Endothelial cell of umbilical vein (primary cell): ENCODE measurements at regions of chr13 and their contacts with region 1.

Region 1: GRCh38 chr13:40666045-40666904 is at the start of gene FOXO1:
- DNase-seq: peak; percentile 79
- H3K4me3 ChIP-seq: peak within 1 kb of the TSS; percentile 67 to 95 (median 86)
- H3K27ac ChIP-seq: peak within 1 kb of the TSS; percentile 81
- H3K4me1 ChIP-seq: peaks cover 24% of the 10 kb centered on the region
- H3K27me3 ChIP-seq: no peaks in the 10 kb centered on the region
- CTCF ChIP-seq: no peak
- POLR2A ChIP-seq: peak; percentile 97
- total RNA-seq, gene FOXO1: 47.6 and 48.5 TPM in 2 replicates

Region 2: GRCh38 chr13:39783050-39783449 is 883.2 kb before region 1 on chr13:
- CTCF ChIA-PET with region 1: interaction called, 6 read pairs
- POLR2A ChIA-PET with region 1: no interaction called
- dilution Hi-C with region 1: no loop called
- intact Hi-C with region 1: loop called (anchors 5 kb)
- DNase-seq: peak; percentile 80
- H3K4me3 ChIP-seq: no peak overlapping the region
- H3K27ac ChIP-seq: no peak overlapping the region
- H3K4me1 ChIP-seq: peaks cover 62% of the 10 kb centered on the region
- H3K27me3 ChIP-seq: no peaks in the 10 kb centered on the region
- CTCF ChIP-seq: no peak
- POLR2A ChIP-seq: no peak

Region 3: DNA sequence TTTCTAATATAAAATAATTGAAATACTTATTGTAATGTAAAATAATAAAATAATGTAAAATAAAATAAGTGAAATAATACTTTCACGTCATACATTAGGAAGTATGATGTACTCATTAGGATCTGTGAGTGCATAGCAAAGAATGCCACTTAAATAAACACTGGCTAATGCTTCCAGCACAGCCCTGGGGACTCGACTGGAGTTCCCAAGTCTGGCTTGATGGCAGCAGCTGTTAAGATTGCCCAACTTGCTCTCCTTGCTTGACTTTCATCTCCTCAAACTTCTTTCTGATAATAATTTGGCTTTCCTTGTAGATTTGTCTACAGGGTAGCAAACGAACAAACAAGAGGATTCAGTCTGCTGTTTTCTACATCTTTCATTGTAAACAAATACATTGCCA is 818.9 kb before region 1 on chr13:
- CTCF ChIA-PET with region 1: no interaction called
- POLR2A ChIA-PET with region 1: no interaction called
- dilution Hi-C with region 1: no loop called
- intact Hi-C with region 1: no loop called
- DNase-seq: no peak
- H3K4me3 ChIP-seq: no peak overlapping the region
- H3K27ac ChIP-seq: no peak overlapping the region
- H3K4me1 ChIP-seq: no peaks in the 10 kb centered on the region
- H3K27me3 ChIP-seq: no peaks in the 10 kb centered on the region
- CTCF ChIP-seq: no peak
- POLR2A ChIP-seq: no peak

Region 4: GRCh38 chr13:40082639-40083038 is 583.6 kb before region 1 on chr13:
- CTCF ChIA-PET with region 1: no interaction called
- POLR2A ChIA-PET with region 1: no interaction called
- dilution Hi-C with region 1: no loop called
- intact Hi-C with region 1: loop called (anchors 5 kb)
- DNase-seq: peak; percentile 99
- H3K4me3 ChIP-seq: no peak overlapping the region
- H3K27ac ChIP-seq: peak overlapping the region; percentile 71
- H3K4me1 ChIP-seq: peaks cover 11% of the 10 kb centered on the region
- H3K27me3 ChIP-seq: no peaks in the 10 kb centered on the region
- CTCF ChIP-seq: peak; percentile 30 to 62
- POLR2A ChIP-seq: no peak

Region 5: DNA sequence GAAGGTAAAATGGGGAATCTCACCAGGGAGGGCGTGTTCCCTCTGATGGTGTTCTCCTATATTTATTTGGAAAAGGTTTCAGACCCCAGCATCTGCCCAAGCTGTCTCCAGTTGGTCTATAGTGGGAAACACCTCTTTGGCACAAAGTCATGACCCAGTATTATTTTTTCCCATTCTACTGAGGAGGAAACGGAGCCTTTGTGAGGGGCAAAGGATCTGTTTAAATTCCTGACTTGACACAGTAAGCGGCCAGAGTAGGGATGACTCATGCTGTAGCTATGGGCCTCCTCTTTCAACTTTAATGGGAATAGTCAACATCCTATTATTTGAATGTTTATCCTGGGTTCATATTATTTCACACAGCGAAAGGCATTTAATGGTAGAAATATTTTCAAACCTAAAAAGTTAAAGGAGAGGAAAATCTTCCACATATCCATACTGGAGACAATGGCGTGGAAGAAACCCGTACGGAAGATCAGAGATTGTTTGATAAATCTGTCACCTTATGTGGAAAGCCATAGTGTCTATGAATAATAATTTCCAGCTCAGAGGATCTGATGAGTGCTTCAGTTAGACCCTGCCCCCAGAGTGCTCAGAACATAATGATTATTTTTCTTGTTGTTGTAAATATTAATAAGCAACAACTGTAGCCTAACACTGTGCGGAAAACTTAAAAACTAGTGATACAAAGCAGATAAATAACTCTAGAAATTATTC is 125.8 kb before region 1 on chr13:
- CTCF ChIA-PET with region 1: interaction called, 4 read pairs
- POLR2A ChIA-PET with region 1: interaction called, 4 read pairs
- dilution Hi-C with region 1: no loop called
- intact Hi-C with region 1: loop called (anchors 1 kb)
- DNase-seq: peak; percentile 96
- H3K4me3 ChIP-seq: no peak overlapping the region
- H3K27ac ChIP-seq: peak overlapping the region; percentile 80
- H3K4me1 ChIP-seq: peaks cover 18% of the 10 kb centered on the region
- H3K27me3 ChIP-seq: no peaks in the 10 kb centered on the region
- CTCF ChIP-seq: no peak
- POLR2A ChIP-seq: no peak

Region 6: GRCh38 chr13:40589285-40590109 is 76.8 kb before region 1 on chr13:
- CTCF ChIA-PET with region 1: interaction called, 5 read pairs
- POLR2A ChIA-PET with region 1: no interaction called
- dilution Hi-C with region 1: no loop called
- intact Hi-C with region 1: loop called (anchors 1 kb)
- DNase-seq: peak; percentile 94
- H3K4me3 ChIP-seq: peak overlapping the region in 1 of 3 experiments; percentile 14
- H3K27ac ChIP-seq: peak overlapping the region; percentile 87
- H3K4me1 ChIP-seq: peaks cover 69% of the 10 kb centered on the region
- H3K27me3 ChIP-seq: no peaks in the 10 kb centered on the region
- CTCF ChIP-seq: no peak
- POLR2A ChIP-seq: peak; percentile 57

Region 7: DNA sequence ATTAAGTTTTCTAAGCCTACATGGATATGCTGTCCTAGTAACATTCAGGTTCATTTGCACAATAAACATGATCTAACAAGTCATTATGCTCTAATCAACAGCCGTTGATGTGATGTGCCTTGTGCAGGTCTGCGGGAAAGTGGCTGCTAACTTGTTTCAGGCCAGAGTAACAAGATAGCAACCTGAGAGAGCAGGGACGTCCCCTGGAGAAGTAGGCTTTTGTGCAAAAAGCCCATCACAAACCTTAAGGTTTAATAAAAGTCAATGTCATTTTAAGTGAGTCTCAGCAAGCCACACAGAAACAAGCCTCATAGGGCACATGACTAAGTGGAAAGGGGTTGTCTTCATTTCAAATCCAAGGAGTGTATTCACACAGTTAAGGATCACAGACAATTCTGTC is 17.4 kb before region 1 on chr13:
- CTCF ChIA-PET with region 1: interaction called, 3 read pairs
- POLR2A ChIA-PET with region 1: no interaction called
- dilution Hi-C with region 1: no loop called
- intact Hi-C with region 1: loop called (anchors 2 kb)
- DNase-seq: peak; percentile 44
- H3K4me3 ChIP-seq: no peak overlapping the region
- H3K27ac ChIP-seq: peak overlapping the region; percentile 7
- H3K4me1 ChIP-seq: peaks cover 36% of the 10 kb centered on the region
- H3K27me3 ChIP-seq: no peaks in the 10 kb centered on the region
- CTCF ChIP-seq: no peak
- POLR2A ChIP-seq: no peak